K562 (cell line): ENCODE measurements at regions of chr14 and their contacts with region 1.

Region 1: GRCh38 chr14:34300882-34301734 is 160.9 kb downstream of the SPTSSA start:
- DNase-seq: peak; percentile 28 to 52 (median 38)
- ATAC-seq: 0 out of 3 replicates have a peak, but pooled peaks have one; percentile 56
- H3K4me3 ChIP-seq: no peak overlapping the region
- H3K27ac ChIP-seq: no peak overlapping the region
- H3K4me1 ChIP-seq: no peaks in the 10 kb centered on the region
- H3K27me3 ChIP-seq: peaks cover 2 to 5% of the 10 kb centered on the region in 2 experiments; a peak in 2 of 5 replicates
- CTCF ChIP-seq: peak; percentile 38 to 68 (median 56); a peak in 5 of 6 replicates
- EP300 ChIP-seq: no peak
- POLR2A ChIP-seq: no peak
- RAD21 ChIP-seq: peak; percentile 64 to 74

Region 2: GRCh38 chr14:33839193-33840076 is 461.7 kb before region 1 on chr14:
- CTCF ChIA-PET with region 1: no interaction called
- POLR2A ChIA-PET with region 1: no interaction called
- in situ Hi-C with region 1: no loop called
- intact Hi-C with region 1: loop called (anchors 10 kb)
- DNase-seq: peak; percentile 43 to 67 (median 52)
- ATAC-seq: peak; percentile 79
- H3K4me3 ChIP-seq: no peak overlapping the region
- H3K27ac ChIP-seq: no peak overlapping the region
- H3K4me1 ChIP-seq: peaks cover 5 to 25% of the 10 kb centered on the region in 2 experiments; a peak in 4 of 5 replicates
- H3K27me3 ChIP-seq: no peaks in the 10 kb centered on the region
- CTCF ChIP-seq: peak; percentile 63 to 80 (median 66)
- EP300 ChIP-seq: no peak
- POLR2A ChIP-seq: no peak
- RAD21 ChIP-seq: peak; percentile 66 to 77

Region 3: DNA sequence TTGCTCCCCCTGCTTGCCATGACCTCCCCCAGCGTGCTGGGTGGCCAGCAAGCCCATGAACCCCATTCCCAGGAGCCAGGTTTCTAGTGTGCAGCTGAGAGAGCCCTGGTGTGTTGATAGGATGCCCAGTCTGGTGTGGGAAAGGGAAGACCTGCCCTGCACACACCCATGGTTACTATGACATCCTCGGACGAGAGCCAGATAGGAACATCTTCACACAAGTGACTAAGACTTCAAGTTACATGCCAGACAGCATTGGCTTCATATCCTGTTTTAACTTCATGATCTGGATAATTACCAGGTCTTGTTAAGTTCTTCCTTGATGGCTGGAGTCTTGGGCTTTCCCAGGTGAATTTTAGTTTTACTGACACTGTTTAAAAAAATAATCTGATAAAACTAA is 153.6 kb before region 1 on chr14:
- CTCF ChIA-PET with region 1: no interaction called
- POLR2A ChIA-PET with region 1: no interaction called
- in situ Hi-C with region 1: no loop called
- intact Hi-C with region 1: no loop called
- DNase-seq: no peak
- ATAC-seq: no peak
- H3K4me3 ChIP-seq: no peak overlapping the region
- H3K27ac ChIP-seq: no peak overlapping the region
- H3K4me1 ChIP-seq: no peaks in the 10 kb centered on the region
- H3K27me3 ChIP-seq: 0 out of 5 replicates have a peak, but pooled peaks cover 0 to 4% of the 10 kb centered on the region in 2 experiments
- CTCF ChIP-seq: no peak
- EP300 ChIP-seq: no peak
- POLR2A ChIP-seq: no peak
- RAD21 ChIP-seq: no peak